CD4-positive, alpha-beta memory T cell (primary cell): ENCODE measurements at regions of chr2 and their contacts with region 1.

Region 1: GRCh38 chr2:27380626-27381545 is at the start of gene ZNF513:
- DNase-seq: peak; percentile 81 to 89 (median 83)
- H3K4me3 ChIP-seq: peak within 1 kb of the TSS; percentile 66 to 79
- H3K4me3 Mint-ChIP-seq: peak within 1 kb of the TSS; percentile 89 to 93 (median 90)
- H3K27ac ChIP-seq: peak within 1 kb of the TSS; percentile 78
- H3K27ac Mint-ChIP-seq: peak within 1 kb of the TSS; percentile 92 to 97 (median 95)
- H3K4me1 ChIP-seq: peaks cover 20% of the 10 kb centered on the region
- H3K4me1 Mint-ChIP-seq: peaks cover 15 to 36% (median 25%) of the 10 kb centered on the region in 4 donors
- H3K27me3 ChIP-seq: no peaks in the 10 kb centered on the region
- H3K27me3 Mint-ChIP-seq: no peaks in the 10 kb centered on the region
- total RNA-seq, gene ZNF513: 17.6 to 20.1 TPM

Region 2: DNA sequence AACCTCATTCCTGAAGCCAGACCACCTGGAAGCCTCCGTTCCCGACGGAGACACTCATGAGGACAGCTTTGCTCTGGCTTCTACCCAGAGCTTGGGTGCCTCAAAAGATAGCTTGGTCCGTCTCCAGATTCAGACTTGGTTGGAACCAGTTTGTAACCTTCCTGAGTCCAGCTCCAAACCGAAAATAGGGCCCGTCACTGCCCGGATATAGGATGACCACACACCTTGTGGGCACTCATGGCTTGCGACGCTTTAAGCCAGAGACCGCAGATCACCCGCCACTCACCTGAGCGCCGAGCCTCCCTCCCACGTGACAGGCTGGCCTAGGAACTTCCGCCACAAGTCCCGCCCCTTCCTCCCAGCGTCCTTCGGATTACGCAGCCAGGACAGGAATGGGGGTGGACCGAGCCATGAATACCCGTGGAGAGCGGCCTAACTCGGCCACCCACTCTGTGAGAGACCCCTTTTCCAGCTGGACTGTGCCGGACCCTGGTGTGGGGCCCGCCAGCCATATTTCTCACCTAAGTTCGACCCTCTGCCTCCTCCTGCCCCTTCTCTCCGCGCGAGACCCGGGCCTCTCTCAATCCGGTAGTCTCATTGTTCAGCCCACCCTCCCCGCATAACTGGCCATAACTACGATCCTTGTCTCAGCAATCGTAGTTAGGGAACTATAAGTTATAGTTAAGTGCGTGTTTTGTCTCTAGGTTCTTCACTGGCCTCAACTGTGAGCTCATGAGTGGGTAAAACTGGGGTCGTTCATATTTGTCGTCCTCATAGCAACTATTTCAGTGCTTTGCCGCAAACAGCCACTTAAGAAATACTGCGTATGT is 57.9 kb before region 1 on chr2 and contains the start of gene MPV17:
- CTCF ChIA-PET with region 1: no interaction called
- POLR2A ChIA-PET with region 1: interaction called, 12 read pairs
- intact Hi-C with region 1: no loop called
- DNase-seq: peak; percentile 82 to 89 (median 82)
- H3K4me3 ChIP-seq: peak within 1 kb of the TSS; percentile 81 to 97
- H3K4me3 Mint-ChIP-seq: peak within 1 kb of the TSS; percentile 95 to 100 (median 96)
- H3K27ac ChIP-seq: peak within 1 kb of the TSS; percentile 95
- H3K27ac Mint-ChIP-seq: peak within 1 kb of the TSS; percentile 96 to 100 (median 98)
- H3K4me1 ChIP-seq: peaks cover 25% of the 10 kb centered on the region
- H3K4me1 Mint-ChIP-seq: peaks cover 12 to 28% (median 18%) of the 10 kb centered on the region in 4 donors
- H3K27me3 ChIP-seq: no peaks in the 10 kb centered on the region
- H3K27me3 Mint-ChIP-seq: no peaks in the 10 kb centered on the region
- total RNA-seq, gene MPV17: 89.3 to 93.3 TPM

Region 3: GRCh38 chr2:27356382-27357181 is 24.3 kb before region 1 on chr2 and contains the start of gene GTF3C2:
- CTCF ChIA-PET with region 1: no interaction called
- POLR2A ChIA-PET with region 1: interaction called, 23 read pairs
- intact Hi-C with region 1: loop called (anchors 1 kb)
- DNase-seq: peak; percentile 93 to 97 (median 93)
- H3K4me3 ChIP-seq: peak within 1 kb of the TSS; percentile 49 to 75
- H3K4me3 Mint-ChIP-seq: peak within 1 kb of the TSS; percentile 96 to 100 (median 98)
- H3K27ac ChIP-seq: peak within 1 kb of the TSS; percentile 85
- H3K27ac Mint-ChIP-seq: peak within 1 kb of the TSS; percentile 96 to 100 (median 99)
- H3K4me1 ChIP-seq: peaks cover 51% of the 10 kb centered on the region
- H3K4me1 Mint-ChIP-seq: peaks cover 36 to 64% (median 48%) of the 10 kb centered on the region in 4 donors
- H3K27me3 ChIP-seq: no peaks in the 10 kb centered on the region
- H3K27me3 Mint-ChIP-seq: no peaks in the 10 kb centered on the region
- total RNA-seq, gene GTF3C2: 82.9 to 90.8 TPM

Region 4: DNA sequence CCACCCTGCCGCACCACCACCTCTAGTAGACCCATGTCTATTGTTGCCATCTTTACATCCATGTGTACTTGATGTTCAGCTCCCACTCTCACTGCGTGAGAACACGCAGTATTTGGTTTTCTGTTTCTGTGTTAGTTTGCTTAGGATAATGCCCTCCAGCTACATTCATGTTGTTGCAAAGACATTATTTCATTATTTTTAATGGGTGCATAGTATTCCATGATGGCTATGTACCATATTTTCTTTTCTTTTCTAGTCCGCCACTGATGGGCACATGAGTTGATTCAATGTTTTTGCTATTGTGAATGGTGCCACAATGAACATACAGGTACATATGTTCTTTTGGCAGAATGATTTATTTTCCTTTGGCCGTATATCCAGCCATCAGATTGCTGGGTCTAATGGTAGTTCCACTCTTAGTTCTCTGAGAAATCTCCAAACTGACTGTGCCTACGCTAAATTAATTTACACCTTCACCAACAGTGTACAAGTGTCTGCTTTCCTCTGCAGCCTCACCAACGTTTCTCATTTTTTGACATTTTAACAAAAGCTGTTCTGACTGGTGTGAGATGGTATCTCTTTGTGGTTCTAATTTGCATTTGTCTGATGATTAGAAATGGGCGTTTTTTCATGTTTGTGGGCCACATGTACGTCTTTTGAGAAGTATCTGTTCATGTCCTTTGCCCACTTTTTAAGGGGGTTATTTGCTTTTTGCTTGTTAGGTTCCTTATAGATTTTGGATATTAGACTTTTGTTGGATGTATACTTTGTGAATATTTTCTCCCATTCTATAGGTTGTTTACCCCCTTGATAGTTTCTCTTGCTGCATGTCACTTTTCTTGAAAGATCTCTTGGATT is 10.2 kb after region 1 on chr2:
- CTCF ChIA-PET with region 1: no interaction called
- POLR2A ChIA-PET with region 1: interaction called, 10 read pairs
- intact Hi-C with region 1: no loop called
- DNase-seq: peak; percentile 57 to 79 (median 69)
- H3K4me3 ChIP-seq: no peak overlapping the region
- H3K4me3 Mint-ChIP-seq: peak overlapping the region; percentile 26 to 79 (median 63)
- H3K27ac ChIP-seq: peak overlapping the region; percentile 66
- H3K27ac Mint-ChIP-seq: peak overlapping the region; percentile 81 to 98 (median 95)
- H3K4me1 ChIP-seq: peaks cover 29% of the 10 kb centered on the region
- H3K4me1 Mint-ChIP-seq: peaks cover 21 to 39% (median 29%) of the 10 kb centered on the region in 4 donors
- H3K27me3 ChIP-seq: no peaks in the 10 kb centered on the region
- H3K27me3 Mint-ChIP-seq: no peaks in the 10 kb centered on the region

Region 5: DNA sequence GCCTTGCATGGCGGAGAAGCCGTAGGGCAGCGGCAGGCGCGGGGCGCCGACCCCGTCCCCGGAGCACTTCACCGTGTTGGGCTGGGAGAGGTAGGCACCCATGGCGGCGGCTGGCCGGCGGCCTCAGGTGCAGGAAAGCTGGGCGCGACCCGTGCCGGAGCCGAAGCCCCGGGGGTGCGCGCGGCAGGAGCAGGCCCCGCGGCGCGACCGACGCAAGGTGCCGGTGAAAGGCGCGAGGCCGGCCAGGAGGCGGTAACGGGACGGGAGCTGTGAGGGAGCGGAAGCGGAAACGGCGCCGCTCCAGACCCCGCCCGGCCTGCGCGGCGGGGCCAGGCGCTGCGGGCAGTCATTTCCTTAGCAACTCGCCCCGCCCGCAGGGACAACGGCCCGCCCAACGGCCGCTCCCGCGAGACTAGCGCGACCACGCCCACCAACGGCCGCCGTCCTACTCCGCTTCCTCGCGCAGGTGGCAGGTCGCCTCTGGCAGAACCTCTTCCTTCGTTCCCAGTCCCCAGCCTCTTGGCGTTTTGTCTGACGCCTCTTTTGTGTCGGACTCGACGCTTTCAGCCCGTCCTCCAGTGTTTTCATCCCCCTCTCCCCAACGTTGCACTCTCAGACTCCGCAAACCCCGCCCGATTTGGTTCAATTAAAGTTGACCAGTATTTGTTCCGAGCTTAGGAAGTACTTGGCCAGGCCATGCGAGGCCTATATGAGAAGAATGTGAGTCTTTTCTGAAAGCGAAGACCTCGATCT is 28.6 kb after region 1 on chr2 and contains the start of gene PPM1G:
- CTCF ChIA-PET with region 1: interaction called, 6 read pairs
- POLR2A ChIA-PET with region 1: interaction called, 45 read pairs
- intact Hi-C with region 1: loop called (anchors 1 kb)
- DNase-seq: peak; percentile 94 to 95 (median 94)
- H3K4me3 ChIP-seq: peak within 1 kb of the TSS; percentile 61 to 92
- H3K4me3 Mint-ChIP-seq: peak within 1 kb of the TSS; percentile 87 to 94 (median 90)
- H3K27ac ChIP-seq: peak within 1 kb of the TSS; percentile 85
- H3K27ac Mint-ChIP-seq: peak within 1 kb of the TSS; percentile 91 to 99 (median 96)
- H3K4me1 ChIP-seq: peaks cover 36% of the 10 kb centered on the region
- H3K4me1 Mint-ChIP-seq: peaks cover 25 to 47% (median 34%) of the 10 kb centered on the region in 4 donors
- H3K27me3 ChIP-seq: no peaks in the 10 kb centered on the region
- H3K27me3 Mint-ChIP-seq: peaks cover 1 to 2% of the 10 kb centered on the region in 2 donors
- total RNA-seq, gene PPM1G: 53.8 to 56.1 TPM

Region 6: GRCh38 chr2:27628767-27629709 is 248.2 kb after region 1 on chr2 and contains the starts of genes CCDC121 and GPN1:
- CTCF ChIA-PET with region 1: no interaction called
- POLR2A ChIA-PET with region 1: no interaction called
- intact Hi-C with region 1: loop called (anchors 1 kb)
- DNase-seq: peak; percentile 93 to 98 (median 94)
- H3K4me3 ChIP-seq: peak within 1 kb of the TSS; percentile 68 to 92
- H3K4me3 Mint-ChIP-seq: peak within 1 kb of the TSS in 2 of 8 donors; percentile 8 to 57
- H3K27ac ChIP-seq: peak within 1 kb of the TSS; percentile 85
- H3K27ac Mint-ChIP-seq: peak within 1 kb of the TSS in 3 of 7 donors; percentile 76 to 85 (median 78)
- H3K4me1 ChIP-seq: peaks cover 17% of the 10 kb centered on the region
- H3K4me1 Mint-ChIP-seq: peaks cover 9 to 21% (median 11%) of the 10 kb centered on the region in 4 donors
- H3K27me3 ChIP-seq: no peaks in the 10 kb centered on the region
- H3K27me3 Mint-ChIP-seq: no peaks in the 10 kb centered on the region
- total RNA-seq, gene CCDC121: 1.3 to 2.2 TPM
- total RNA-seq, gene GPN1: 28.9 to 32.8 TPM

Region 7: GRCh38 chr2:27663463-27664249 is 282.8 kb after region 1 on chr2 and contains the starts of genes SLC4A1AP and SUPT7L:
- CTCF ChIA-PET with region 1: no interaction called
- POLR2A ChIA-PET with region 1: no interaction called
- intact Hi-C with region 1: loop called (anchors 1 kb)
- DNase-seq: peak; percentile 82 to 85 (median 85)
- H3K4me3 ChIP-seq: peak within 1 kb of the TSS; percentile 99
- H3K4me3 Mint-ChIP-seq: peak within 1 kb of the TSS; percentile 96 to 100 (median 100)
- H3K27ac ChIP-seq: peak within 1 kb of the TSS; percentile 99
- H3K27ac Mint-ChIP-seq: peak within 1 kb of the TSS; percentile 98 to 100 (median 99)
- H3K4me1 ChIP-seq: peaks cover 31% of the 10 kb centered on the region
- H3K4me1 Mint-ChIP-seq: peaks cover 31 to 63% (median 49%) of the 10 kb centered on the region in 4 donors
- H3K27me3 ChIP-seq: no peaks in the 10 kb centered on the region
- H3K27me3 Mint-ChIP-seq: no peaks in the 10 kb centered on the region
- total RNA-seq, gene SLC4A1AP: 24.4 to 26.6 TPM
- total RNA-seq, gene SUPT7L: 45.4 to 48.5 TPM